ENCODE measurements at regions of chr12 and their contacts with region 1.

Region 1: DNA sequence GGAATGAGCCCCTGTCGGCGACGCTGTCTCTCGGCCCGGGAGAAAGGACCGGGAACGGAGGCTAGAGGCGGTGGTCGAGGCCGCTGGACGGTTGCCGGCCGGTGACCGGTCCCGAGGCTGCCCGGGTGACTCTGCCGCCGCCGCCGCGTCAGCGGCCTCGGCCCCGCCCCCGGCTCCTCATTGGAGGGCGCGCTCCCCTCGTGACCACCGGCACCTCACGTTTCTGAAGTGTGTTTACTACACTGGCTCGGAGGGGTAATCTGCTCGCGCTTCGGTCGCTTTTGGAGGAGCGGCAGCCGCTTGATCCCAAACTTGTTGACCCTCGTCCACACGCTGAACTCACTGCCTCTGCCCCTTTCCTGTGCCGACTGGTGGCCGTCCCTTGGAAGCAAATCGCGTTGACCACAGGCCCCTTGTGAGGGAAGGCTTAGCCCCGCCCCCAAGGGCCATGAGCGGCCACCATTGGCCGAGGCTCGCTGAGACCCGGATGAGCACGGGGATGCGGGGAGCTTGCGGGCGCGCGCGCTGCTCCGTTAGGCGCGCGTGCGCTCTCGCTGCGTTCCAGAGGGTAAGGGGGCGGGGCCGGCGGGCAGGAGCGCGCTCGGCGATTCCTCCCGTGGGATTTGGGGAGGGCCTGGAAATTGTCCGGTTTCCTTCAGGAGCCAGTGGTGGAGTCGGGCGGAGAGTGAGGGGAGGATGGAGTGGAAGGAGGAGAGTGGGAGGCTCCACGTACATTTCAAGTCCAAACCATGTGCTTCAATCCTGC is at the start of gene CRY1:
- DNase-seq: peak; percentile 86 to 96 (median 91)
- ATAC-seq: peak; percentile 75
- H3K4me3 ChIP-seq: peak within 1 kb of the TSS; percentile 90
- H3K4me3 Mint-ChIP-seq: no peak within 1 kb of the TSS
- H3K27ac ChIP-seq: peak within 1 kb of the TSS; percentile 99
- H3K27ac Mint-ChIP-seq: no peak within 1 kb of the TSS
- H3K4me1 ChIP-seq: peaks cover 31% of the 10 kb centered on the region
- H3K4me1 Mint-ChIP-seq: peaks cover 17% of the 10 kb centered on the region
- H3K27me3 ChIP-seq: no peaks in the 10 kb centered on the region
- H3K27me3 Mint-ChIP-seq: peaks cover 10% of the 10 kb centered on the region
- CTCF ChIP-seq: no peak
- total RNA-seq, gene CRY1: 70.7 to 77.4 TPM

Region 2: DNA sequence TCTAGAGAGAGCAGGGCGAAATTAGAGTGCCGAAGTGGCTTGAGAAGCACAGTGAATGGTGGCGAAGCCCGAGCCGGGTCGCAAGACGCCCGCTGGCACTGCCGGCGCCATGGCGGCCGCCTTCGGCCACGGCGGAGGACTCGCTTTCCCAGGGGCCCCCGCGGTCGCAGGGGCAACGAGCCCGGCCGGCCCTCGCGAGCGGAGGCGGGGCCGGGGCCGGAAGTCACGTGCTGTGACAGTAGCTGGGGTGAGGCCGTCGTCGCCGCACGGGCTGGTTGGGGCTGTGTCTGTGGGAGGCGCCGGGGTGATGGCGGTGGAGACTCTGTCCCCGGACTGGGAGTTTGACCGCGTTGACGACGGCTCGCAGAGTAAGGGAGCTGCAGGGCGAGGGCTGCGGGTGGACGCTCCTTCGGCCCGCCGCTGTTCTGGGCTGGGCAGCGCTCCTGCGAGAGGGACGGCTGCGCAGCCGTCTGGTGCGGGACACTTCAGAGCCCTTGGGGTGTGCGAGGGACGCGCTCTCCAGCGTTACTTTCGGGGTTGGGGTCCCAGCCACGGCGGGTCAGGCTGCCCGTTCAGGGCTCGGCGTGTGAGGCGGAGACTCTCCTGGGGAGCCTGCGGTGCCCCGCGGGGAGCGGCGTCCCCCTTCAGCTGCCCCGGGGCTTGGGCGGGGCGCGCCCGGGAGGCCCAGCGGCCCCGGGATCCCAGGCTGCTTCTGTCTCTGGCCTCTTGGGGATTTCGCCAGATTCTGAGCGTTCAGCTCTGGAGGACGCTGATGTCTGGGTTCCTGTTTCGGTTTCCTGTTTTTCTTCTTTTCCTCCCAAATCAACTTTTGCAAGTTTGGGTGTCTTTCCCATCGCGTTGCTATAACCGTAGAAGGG is 1985.9 kb before region 1 on chr12 and contains the start of gene WASHC4:
- CTCF ChIA-PET with region 1: no interaction called
- POLR2A ChIA-PET with region 1: no interaction called
- intact Hi-C with region 1: loop called in 1 of 2 experiments (anchors 5 kb)
- DNase-seq: peak; percentile 87 to 96 (median 90)
- ATAC-seq: peak; percentile 95
- H3K4me3 ChIP-seq: peak within 1 kb of the TSS; percentile 93
- H3K4me3 Mint-ChIP-seq: peak within 1 kb of the TSS; percentile 98
- H3K27ac ChIP-seq: peak within 1 kb of the TSS; percentile 95 to 96
- H3K27ac Mint-ChIP-seq: peak within 1 kb of the TSS; percentile 89
- H3K4me1 ChIP-seq: peaks cover 13% of the 10 kb centered on the region
- H3K4me1 Mint-ChIP-seq: peaks cover 49% of the 10 kb centered on the region
- H3K27me3 ChIP-seq: peaks cover 4 to 9% of the 10 kb centered on the region in 2 experiments
- H3K27me3 Mint-ChIP-seq: peaks cover 30% of the 10 kb centered on the region
- CTCF ChIP-seq: no peak
- total RNA-seq, gene WASHC4: 32.5 to 33.6 TPM

Region 3: DNA sequence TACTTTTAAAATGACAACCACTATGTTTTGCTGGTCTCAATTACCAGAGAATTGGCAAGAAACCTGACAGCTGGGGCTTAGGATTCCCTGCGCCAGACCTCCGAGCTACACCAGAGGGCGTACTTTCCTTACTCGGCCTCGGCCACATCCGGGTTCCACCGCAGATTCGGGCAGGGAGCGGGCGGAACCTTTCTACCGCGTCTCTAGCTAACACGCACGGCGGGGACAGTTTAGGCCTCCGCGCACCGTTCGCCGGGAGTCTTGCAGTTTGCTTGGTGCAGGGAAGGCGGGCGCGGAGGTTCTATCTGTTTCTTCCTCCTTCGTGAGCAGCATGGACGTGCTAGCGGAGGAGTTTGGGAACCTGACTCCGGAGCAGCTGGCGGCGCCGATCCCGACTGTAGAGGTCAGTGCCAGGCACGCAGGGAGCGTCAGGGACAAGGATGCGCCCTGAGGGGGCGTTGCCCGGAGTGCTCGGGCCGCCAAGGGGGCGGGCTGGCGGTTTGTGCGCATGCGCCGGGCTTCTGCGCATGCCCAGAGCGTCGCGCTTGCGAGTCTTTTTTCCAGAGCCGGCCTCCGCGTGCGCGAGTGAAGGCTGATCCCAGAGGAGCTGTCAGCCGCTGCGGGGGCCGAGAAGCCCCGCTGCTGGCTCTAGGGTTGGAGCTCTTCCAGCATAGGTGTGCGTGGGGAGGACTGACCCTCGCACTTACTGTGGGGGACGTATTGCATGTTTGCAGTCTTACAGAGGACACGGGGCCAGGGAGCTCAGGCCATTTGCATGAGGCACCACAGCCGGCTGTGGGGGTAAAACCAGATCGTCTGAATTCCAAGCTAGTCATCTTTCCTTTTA is 735.8 kb before region 1 on chr12 and contains the start of gene POLR3B:
- CTCF ChIA-PET with region 1: no interaction called
- POLR2A ChIA-PET with region 1: interaction called, 13 read pairs
- intact Hi-C with region 1: no loop called
- DNase-seq: peak; percentile 93 to 98 (median 95)
- ATAC-seq: peak; percentile 93
- H3K4me3 ChIP-seq: peak within 1 kb of the TSS; percentile 66
- H3K4me3 Mint-ChIP-seq: peak within 1 kb of the TSS; percentile 86
- H3K27ac ChIP-seq: peak within 1 kb of the TSS; percentile 64 to 78
- H3K27ac Mint-ChIP-seq: peak within 1 kb of the TSS; percentile 83
- H3K4me1 ChIP-seq: peaks cover 12% of the 10 kb centered on the region
- H3K4me1 Mint-ChIP-seq: peaks cover 18% of the 10 kb centered on the region
- H3K27me3 ChIP-seq: no peaks in the 10 kb centered on the region
- H3K27me3 Mint-ChIP-seq: no peaks in the 10 kb centered on the region
- CTCF ChIP-seq: peak; percentile 88
- total RNA-seq, gene POLR3B: 2.5 to 2.6 TPM

Region 4: DNA sequence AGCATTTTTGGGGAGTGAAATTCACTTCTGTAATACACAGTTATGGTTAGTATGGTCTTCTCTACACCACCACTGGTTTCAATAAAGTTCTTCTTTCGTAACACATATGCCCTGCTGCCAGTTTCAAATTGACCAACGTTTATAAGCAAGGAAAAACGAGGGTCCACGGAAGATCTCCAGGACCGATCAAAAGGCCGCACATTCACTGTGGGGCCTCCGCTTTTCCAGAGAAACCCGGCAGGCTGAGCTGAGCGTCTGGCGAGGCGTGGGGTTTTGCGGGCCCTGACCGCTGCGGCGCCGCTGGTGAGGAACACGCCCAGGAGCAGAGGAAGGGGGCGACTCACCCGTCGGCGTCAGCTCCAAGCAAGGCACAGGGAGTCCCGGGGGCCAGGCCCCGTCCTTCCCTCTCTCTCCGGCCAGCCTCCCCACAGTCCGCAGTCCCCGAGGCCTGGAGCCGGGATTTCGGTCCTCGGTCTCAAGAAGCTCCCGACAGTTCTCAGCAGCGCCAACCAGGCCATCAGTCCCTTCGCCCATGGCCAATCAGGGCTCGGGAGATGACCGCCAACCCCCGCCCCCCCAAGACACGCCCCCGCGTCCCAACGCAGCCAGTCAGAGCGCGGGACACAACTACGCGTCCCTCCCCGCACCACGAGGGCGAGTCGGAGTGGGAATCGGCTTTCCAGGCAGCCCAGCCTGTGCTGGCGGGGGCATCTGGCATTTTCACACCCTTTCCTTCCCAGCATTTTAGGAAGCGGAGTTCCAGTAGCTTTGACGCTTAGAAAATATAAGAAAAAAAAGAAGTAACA is 106.8 kb before region 1 on chr12 and contains the start of gene MTERF2:
- CTCF ChIA-PET with region 1: interaction called, 3 read pairs
- POLR2A ChIA-PET with region 1: interaction called, 3 read pairs
- intact Hi-C with region 1: loop called in 1 of 2 experiments (anchors 1 kb)
- DNase-seq: peak; percentile 61 to 91 (median 71)
- ATAC-seq: peak; percentile 94
- H3K4me3 ChIP-seq: peak within 1 kb of the TSS; percentile 87
- H3K4me3 Mint-ChIP-seq: peak within 1 kb of the TSS; percentile 97
- H3K27ac ChIP-seq: peak within 1 kb of the TSS in 1 of 2 donors; percentile 41
- H3K27ac Mint-ChIP-seq: peak within 1 kb of the TSS; percentile 78
- H3K4me1 ChIP-seq: peaks cover 27% of the 10 kb centered on the region
- H3K4me1 Mint-ChIP-seq: peaks cover 50% of the 10 kb centered on the region
- H3K27me3 ChIP-seq: no peaks in the 10 kb centered on the region
- H3K27me3 Mint-ChIP-seq: no peaks in the 10 kb centered on the region
- CTCF ChIP-seq: no peak
- total RNA-seq, gene MTERF2: 6.1 to 7.6 TPM

Region 5: DNA sequence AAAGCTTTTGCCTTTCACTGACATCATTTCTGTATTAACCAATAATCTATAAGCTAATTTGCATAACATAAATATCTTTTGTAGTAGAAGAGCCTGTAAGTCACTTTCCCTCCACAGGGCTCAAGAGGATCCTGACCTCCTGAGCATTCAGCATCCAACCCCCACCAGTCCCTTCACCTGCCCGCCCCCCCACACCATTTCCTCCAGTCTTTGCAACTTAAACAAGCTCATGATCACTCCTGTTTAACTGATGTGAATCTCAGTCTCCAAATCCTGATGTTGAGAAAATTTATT is 11.8 kb after region 1 on chr12:
- CTCF ChIA-PET with region 1: interaction called, 15 read pairs
- POLR2A ChIA-PET with region 1: interaction called, 14 read pairs
- intact Hi-C with region 1: loop called (anchors 1 to 2 kb)
- DNase-seq: no peak
- ATAC-seq: no peak
- H3K4me3 ChIP-seq: no peak overlapping the region
- H3K4me3 Mint-ChIP-seq: no peak overlapping the region
- H3K27ac ChIP-seq: no peak overlapping the region
- H3K27ac Mint-ChIP-seq: no peak overlapping the region
- H3K4me1 ChIP-seq: peaks cover 3% of the 10 kb centered on the region
- H3K4me1 Mint-ChIP-seq: no peaks in the 10 kb centered on the region
- H3K27me3 ChIP-seq: no peaks in the 10 kb centered on the region
- H3K27me3 Mint-ChIP-seq: peaks cover 6% of the 10 kb centered on the region
- CTCF ChIP-seq: no peak

Region 6: DNA sequence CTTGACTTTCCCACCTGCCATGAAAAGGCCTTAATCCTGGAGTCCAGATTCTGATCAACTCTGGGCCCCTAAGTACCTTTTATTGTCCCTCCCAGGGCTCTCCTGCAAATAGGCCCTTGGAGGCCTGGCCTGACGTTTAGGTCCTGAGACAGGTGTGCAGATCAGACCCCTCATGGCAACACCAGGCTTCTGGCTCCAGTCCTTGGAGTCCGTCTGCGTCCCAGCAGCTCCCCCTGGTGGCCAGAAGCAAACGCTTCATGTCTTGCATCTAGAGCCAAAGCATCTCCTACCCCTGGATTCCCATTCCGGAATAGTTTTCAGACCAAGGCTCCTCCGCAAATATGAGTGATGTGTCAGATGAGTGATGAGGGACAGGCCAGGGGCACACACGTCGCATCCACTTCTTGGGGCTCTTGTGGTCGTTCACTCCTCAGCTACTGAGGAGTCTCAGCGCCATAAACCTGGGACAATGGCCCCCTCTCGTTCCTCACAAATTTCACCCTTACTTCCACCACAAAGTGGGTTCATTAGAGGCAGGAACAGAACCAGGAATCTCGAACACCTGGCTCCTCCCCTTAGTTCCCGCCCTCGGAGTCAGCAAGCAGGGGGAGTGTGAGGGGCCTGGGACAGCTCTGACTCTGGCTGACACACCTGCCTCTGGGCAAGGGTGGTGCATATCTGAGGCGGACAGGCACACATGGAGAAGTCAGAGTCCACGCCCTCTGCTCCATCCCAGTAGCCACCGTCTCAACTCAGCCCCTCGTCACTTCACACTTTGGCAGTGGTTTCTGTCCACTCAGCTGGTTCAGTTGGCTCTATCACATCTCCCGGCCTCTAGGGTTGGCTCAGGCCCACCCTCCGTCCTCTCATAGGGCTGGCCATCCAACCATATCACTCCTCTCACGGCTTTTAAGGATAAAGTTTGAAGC is 514.1 kb after region 1 on chr12:
- CTCF ChIA-PET with region 1: no interaction called
- POLR2A ChIA-PET with region 1: no interaction called
- intact Hi-C with region 1: loop called in 1 of 2 experiments (anchors 1 kb)
- DNase-seq: peak; percentile 73 to 90 (median 76)
- ATAC-seq: peak; percentile 76
- H3K4me3 ChIP-seq: no peak overlapping the region
- H3K4me3 Mint-ChIP-seq: no peak overlapping the region
- H3K27ac ChIP-seq: no peak overlapping the region
- H3K27ac Mint-ChIP-seq: no peak overlapping the region
- H3K4me1 ChIP-seq: no peaks in the 10 kb centered on the region
- H3K4me1 Mint-ChIP-seq: no peaks in the 10 kb centered on the region
- H3K27me3 ChIP-seq: no peaks in the 10 kb centered on the region
- H3K27me3 Mint-ChIP-seq: no peaks in the 10 kb centered on the region
- CTCF ChIP-seq: peak; percentile 95